Breast epithelium (tissue), 4 donors: ENCODE measurements at regions of chr11 and their contacts with region 1.

Region 1: GRCh38 chr11:12319988-12320387 is 57.4 kb upstream of the PARVA start:
- DNase-seq: no peak
- H3K4me3 ChIP-seq: no peak overlapping the region
- H3K27ac ChIP-seq: no peak overlapping the region
- H3K4me1 ChIP-seq: no peaks in the 10 kb centered on the region
- H3K27me3 ChIP-seq: no peaks in the 10 kb centered on the region
- CTCF ChIP-seq: no peak
- POLR2A ChIP-seq: no peak

Region 2: GRCh38 chr11:12343526-12343925 is 23.5 kb after region 1 on chr11:
- intact Hi-C with region 1: loop called (anchors 1 kb)
- DNase-seq: no peak
- H3K4me3 ChIP-seq: no peak overlapping the region
- H3K27ac ChIP-seq: no peak overlapping the region
- H3K4me1 ChIP-seq: no peaks in the 10 kb centered on the region
- H3K27me3 ChIP-seq: no peaks in the 10 kb centered on the region
- CTCF ChIP-seq: no peak
- POLR2A ChIP-seq: no peak

Region 3: DNA sequence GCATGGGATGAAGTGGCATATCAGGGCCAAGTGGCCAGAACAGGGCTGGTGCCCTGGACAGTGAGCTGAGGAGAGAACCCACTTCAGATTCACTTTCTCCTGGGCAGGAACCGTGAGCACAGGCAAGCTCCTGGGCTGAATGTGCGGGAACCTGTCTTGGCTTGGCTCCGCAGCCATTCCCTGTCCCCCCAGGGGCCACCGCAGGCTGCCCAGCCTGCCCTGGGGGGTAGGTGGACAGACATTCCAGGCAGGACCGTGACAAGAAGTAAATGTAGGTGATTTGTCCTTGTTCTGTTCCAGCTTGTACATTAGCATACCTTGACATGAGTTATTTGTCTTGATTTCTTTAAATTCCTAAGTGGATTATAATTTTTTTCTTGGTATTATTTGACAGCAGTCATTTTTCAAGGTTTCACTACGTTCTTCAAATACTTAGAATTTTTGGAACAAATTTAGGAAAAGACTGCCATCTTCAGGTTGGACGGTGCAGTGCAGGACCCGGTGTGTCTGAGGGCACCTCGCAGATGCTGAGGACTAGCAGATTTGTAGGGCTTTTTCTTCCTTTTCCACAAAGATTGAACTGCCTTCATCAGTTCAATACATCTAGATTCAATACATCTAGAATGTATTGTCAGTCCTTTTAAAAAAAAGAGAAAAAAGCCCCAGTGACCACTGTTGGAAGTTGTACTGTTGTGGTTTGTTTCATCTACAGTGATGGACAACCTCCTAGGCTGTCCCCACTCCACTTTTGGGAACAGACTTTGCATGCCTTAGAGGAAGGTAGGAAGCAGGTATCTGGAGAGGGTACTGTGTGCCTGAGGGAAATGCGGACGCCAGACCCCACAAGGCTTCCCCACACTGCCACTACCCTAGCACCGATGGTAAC is 574.0 kb after region 1 on chr11:
- intact Hi-C with region 1: loop called (anchors 10 kb)
- DNase-seq: peak; percentile 55 to 70
- H3K4me3 ChIP-seq: peak overlapping the region in 1 of 3 donors; percentile 8
- H3K27ac ChIP-seq: peak overlapping the region; percentile 31 to 74
- H3K4me1 ChIP-seq: peaks cover 4 to 7% of the 10 kb centered on the region in 2 donors
- H3K27me3 ChIP-seq: no peaks in the 10 kb centered on the region
- CTCF ChIP-seq: peak; percentile 75 to 91 (median 89)
- POLR2A ChIP-seq: no peak